Activated CD4-positive, alpha-beta memory T cell treated with anti-CD3 and anti-CD28 coated beads for 36 hours (primary cell): ENCODE measurements at regions of chr2 and their contacts with region 1.

Region 1: DNA sequence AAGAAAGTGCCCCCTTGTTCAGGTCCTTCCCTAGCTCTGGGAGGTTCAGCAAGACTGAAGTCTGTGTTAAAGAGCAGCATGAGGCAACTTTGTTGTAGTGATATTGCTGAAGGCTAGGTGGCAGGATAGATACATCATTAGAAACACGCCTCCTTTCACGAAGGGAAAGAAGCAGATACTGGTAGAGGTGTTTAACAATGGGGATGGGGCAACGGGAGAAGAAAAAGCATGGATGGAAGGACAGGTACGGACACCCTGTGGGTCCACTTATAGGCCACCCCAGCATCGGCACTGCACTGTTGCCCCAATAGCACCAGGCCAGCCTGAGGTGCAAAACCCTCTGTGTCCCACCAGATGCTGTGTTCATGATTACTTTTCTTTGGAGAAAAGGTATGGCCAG is 3.5 kb upstream of the IGFBP5 start:
- DNase-seq: no peak
- H3K4me3 Mint-ChIP-seq: no peak overlapping the region
- H3K27ac Mint-ChIP-seq: no peak overlapping the region
- H3K4me1 Mint-ChIP-seq: peaks cover 1% of the 10 kb centered on the region
- H3K27me3 Mint-ChIP-seq: peaks cover 30% of the 10 kb centered on the region

Region 2: DNA sequence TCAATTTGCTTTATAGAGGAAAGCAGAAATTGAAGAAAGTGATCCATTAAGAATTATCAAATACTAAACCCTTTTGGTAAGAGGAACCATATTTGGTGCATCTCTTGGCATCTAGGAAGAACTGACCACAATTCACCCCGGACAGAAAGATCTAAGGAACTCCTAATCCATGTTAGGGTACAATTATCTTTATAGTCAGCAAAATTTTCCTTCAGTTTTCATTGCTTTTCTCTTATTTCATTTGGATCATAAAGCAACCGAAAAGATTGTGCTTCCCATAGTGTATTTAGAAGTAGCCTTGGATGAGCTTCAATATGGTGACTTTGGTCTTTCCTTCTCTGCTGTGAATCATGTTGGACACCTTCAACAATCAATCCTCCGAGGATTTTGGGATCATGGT is 46.6 kb after region 1 on chr2:
- CTCF ChIA-PET with region 1: no interaction called
- POLR2A ChIA-PET with region 1: no interaction called
- intact Hi-C with region 1: loop called (anchors 5 kb)
- DNase-seq: no peak
- H3K4me3 Mint-ChIP-seq: no peak overlapping the region
- H3K27ac Mint-ChIP-seq: no peak overlapping the region
- H3K4me1 Mint-ChIP-seq: no peaks in the 10 kb centered on the region
- H3K27me3 Mint-ChIP-seq: peaks cover 26% of the 10 kb centered on the region

Region 3: DNA sequence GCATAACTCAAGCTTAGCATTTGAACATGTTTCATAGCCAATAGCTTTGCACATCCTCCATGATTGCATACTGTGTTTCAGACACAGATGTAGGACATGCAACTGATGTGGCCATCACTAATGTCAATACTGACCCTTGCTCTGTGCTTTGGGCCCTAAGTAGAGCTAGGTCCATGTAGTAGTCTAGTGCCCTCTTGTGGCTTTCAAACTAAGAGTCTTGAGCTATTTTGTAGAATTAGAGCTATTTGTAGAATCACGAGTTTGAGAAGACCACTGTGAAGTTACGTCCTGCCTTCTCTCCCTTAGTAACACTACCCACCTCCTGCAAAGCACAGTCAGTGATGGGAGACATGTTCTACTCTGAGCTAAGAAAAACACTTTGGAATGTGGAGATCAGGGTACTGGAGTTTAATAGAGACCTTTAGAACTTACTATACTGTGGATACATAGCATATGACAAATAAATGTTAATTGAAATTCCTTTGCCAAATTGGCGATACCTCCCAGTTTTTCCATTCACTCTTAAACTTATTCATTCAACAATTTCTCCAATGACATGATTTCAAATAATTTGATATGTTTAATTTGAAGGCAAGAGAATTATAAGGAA is 467.5 kb after region 1 on chr2:
- CTCF ChIA-PET with region 1: interaction called, 3 read pairs
- POLR2A ChIA-PET with region 1: no interaction called
- intact Hi-C with region 1: loop called (anchors 5 kb)
- DNase-seq: no peak
- H3K4me3 Mint-ChIP-seq: no peak overlapping the region
- H3K27ac Mint-ChIP-seq: no peak overlapping the region
- H3K4me1 Mint-ChIP-seq: peaks cover 8% of the 10 kb centered on the region
- H3K27me3 Mint-ChIP-seq: peaks cover 13% of the 10 kb centered on the region

Region 4: DNA sequence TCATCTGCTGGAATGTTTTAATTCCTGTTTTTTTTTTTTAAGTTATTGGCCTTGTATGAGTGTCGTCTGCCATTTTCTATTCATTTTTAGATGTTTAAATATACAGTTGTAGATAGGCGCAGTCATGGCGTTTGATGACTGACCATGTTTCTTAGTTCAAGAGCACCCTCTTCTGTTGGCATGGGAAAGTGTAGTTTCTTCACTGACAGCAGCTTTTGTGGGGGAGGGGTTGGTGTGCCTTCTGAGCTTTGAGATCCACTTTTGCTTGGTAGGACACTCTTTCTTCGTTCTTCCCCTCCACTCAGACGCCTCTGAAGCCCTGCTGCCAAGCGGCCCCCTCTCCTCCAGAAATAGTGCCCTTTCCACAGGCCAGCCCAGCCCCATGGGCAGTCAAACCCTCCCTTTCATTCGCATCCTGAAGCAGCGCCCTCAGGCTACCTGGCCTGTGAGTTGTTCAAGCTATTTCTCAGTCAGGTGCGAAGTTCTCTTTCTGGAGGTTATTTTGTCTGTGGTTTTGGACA is 811.9 kb after region 1 on chr2:
- CTCF ChIA-PET with region 1: interaction called, 10 read pairs
- POLR2A ChIA-PET with region 1: no interaction called
- intact Hi-C with region 1: loop called (anchors 2 kb)
- DNase-seq: peak; percentile 44
- H3K4me3 Mint-ChIP-seq: no peak overlapping the region
- H3K27ac Mint-ChIP-seq: no peak overlapping the region
- H3K4me1 Mint-ChIP-seq: peaks cover 5% of the 10 kb centered on the region
- H3K27me3 Mint-ChIP-seq: no peaks in the 10 kb centered on the region

Region 5: DNA sequence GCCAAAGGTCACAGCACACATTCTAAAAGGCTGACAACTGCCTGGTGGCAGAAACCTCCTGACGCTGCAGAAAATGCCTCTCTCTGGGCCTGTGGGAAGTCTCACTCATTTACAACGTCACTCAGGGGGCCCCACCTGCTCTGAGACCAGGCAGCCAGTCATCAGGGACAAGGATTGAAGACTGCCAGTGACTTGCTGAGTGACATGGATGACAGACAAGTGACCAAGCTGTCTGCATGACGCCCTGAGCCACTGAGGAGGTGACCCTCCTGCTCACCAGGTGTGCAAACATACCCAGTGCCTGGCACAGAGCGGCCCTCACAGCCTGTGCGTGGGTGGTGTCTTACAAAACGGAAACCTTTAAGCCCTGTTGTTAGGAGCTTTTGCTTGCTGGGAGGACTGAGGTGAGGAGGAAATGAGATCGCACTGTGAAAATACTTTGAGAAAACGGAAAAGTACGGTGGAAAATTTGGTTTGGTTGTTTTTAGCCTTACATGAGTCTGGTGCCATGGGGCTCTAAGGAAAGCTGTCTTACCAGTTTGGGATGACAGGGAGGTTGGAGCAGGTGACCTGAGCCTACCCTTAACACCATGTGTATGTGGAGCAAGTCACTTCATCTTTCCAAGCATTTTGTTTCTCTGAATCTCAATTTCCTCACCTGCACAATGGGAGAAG is 911.6 kb after region 1 on chr2:
- CTCF ChIA-PET with region 1: no interaction called
- POLR2A ChIA-PET with region 1: no interaction called
- intact Hi-C with region 1: loop called (anchors 10 kb)
- DNase-seq: peak; percentile 86
- H3K4me3 Mint-ChIP-seq: peak overlapping the region; percentile 42
- H3K27ac Mint-ChIP-seq: peak overlapping the region; percentile 96
- H3K4me1 Mint-ChIP-seq: peaks cover 50% of the 10 kb centered on the region
- H3K27me3 Mint-ChIP-seq: no peaks in the 10 kb centered on the region

Region 6: DNA sequence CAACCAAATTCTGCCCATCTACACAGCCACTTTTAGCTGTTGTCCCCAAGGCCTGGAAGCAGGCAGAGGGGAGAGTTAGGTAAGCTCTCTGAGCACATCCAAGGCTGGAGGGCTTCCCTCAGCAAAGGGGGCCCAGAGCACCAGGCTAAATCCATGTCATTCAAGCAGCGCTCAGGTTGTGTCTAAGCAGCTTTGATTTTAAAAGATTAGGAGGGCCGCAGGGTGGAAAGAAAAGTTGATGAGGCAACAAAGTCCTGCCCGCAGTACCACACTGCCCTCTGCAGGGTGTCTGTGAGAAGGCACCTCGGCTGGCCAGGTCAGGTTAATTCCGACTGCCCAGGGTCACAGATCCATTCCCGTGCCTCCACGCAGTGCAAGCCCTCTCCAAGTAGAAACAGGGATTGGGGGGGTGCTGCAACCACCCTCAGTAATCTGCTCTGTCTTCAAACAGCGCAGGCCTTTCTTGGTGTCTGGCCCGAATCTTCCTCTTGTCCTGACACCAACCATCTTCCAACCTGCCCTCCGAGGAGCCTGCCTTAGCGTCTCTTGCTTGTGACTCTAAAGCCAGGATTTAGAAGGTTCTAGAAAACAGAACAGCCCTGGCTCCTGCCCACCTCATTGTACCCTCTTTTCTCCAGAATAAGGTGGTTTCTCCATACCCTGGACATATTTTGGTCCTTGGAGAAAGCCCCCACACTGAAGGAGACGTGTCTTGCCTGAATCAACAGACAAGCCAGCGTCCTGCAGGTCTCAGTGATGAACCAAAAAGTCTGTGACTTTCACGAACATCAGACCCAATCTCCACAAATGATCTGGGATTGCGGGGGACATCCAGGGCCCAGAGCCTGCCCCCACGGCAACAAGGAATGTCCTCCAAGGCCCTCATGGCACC is 1014.7 kb after region 1 on chr2:
- CTCF ChIA-PET with region 1: interaction called, 6 read pairs
- POLR2A ChIA-PET with region 1: no interaction called
- intact Hi-C with region 1: loop called (anchors 1 kb)
- DNase-seq: peak; percentile 82
- H3K4me3 Mint-ChIP-seq: no peak overlapping the region
- H3K27ac Mint-ChIP-seq: no peak overlapping the region
- H3K4me1 Mint-ChIP-seq: no peaks in the 10 kb centered on the region
- H3K27me3 Mint-ChIP-seq: peaks cover 2% of the 10 kb centered on the region